ENCODE measurements at regions of chr19 and their contacts with region 1.

Region 1: GRCh38 chr19:53792721-53793433 is 31.2 kb downstream of the NLRP12 start:
- DNase-seq: peak; percentile 79
- ATAC-seq: peak; percentile 98
- H3K4me3 ChIP-seq: no peak overlapping the region
- H3K4me3 Mint-ChIP-seq: no peak overlapping the region
- H3K27ac ChIP-seq: no peak overlapping the region
- H3K27ac Mint-ChIP-seq: no peak overlapping the region
- H3K4me1 ChIP-seq: no peaks in the 10 kb centered on the region
- H3K4me1 Mint-ChIP-seq: no peaks in the 10 kb centered on the region
- H3K27me3 ChIP-seq: no peaks in the 10 kb centered on the region
- H3K27me3 Mint-ChIP-seq: no peaks in the 10 kb centered on the region
- CTCF ChIP-seq: peak; percentile 95

Region 2: GRCh38 chr19:53847555-53847954 is 54.7 kb after region 1 on chr19:
- CTCF ChIA-PET with region 1: no interaction called
- POLR2A ChIA-PET with region 1: no interaction called
- intact Hi-C with region 1: no loop called
- DNase-seq: no peak
- ATAC-seq: no peak
- H3K4me3 ChIP-seq: no peak overlapping the region
- H3K4me3 Mint-ChIP-seq: no peak overlapping the region
- H3K27ac ChIP-seq: no peak overlapping the region
- H3K27ac Mint-ChIP-seq: no peak overlapping the region
- H3K4me1 ChIP-seq: peaks cover 8 to 13% of the 10 kb centered on the region in 2 donors
- H3K4me1 Mint-ChIP-seq: peaks cover 7% of the 10 kb centered on the region
- H3K27me3 ChIP-seq: peaks cover 0 to 26% (median 9%) of the 10 kb centered on the region in 4 experiments
- H3K27me3 Mint-ChIP-seq: peaks cover 28% of the 10 kb centered on the region
- CTCF ChIP-seq: no peak

Region 3: DNA sequence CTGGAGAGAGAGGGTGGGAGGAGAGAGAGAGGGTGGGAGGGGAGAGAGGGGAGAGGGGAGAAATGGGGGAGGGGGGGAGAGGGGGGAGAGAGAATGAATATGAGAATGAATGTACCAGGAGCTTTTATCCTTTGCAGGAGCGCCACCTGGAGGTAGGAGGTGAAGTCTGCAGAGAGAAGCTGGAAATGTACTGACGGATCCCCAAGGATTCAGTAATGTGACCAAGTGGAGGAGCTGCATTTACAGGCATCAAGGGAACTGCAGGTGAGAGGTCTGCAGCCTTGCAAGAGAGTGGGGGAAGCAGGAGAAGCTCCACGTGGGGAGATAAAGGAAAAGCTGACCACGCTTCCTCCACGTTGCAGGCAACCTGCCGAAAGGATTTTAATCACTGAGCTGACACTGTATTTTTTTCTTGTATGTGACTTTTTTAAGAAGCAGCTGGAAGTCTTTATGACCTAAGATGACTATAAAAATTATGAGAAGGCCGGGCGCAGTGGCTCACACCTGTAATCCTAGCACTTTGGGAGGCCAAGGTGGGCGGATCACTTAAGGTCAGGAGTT is 237.1 kb after region 1 on chr19:
- CTCF ChIA-PET with region 1: interaction called, 46 read pairs
- POLR2A ChIA-PET with region 1: no interaction called
- intact Hi-C with region 1: no loop called
- DNase-seq: peak; percentile 56
- ATAC-seq: no peak
- H3K4me3 ChIP-seq: no peak overlapping the region
- H3K4me3 Mint-ChIP-seq: no peak overlapping the region
- H3K27ac ChIP-seq: no peak overlapping the region
- H3K27ac Mint-ChIP-seq: no peak overlapping the region
- H3K4me1 ChIP-seq: no peaks in the 10 kb centered on the region
- H3K4me1 Mint-ChIP-seq: no peaks in the 10 kb centered on the region
- H3K27me3 ChIP-seq: peaks cover 0 to 6% (median 0%) of the 10 kb centered on the region in 4 experiments
- H3K27me3 Mint-ChIP-seq: peaks cover 27% of the 10 kb centered on the region
- CTCF ChIP-seq: peak; percentile 59